CD4-positive, alpha-beta T cell (primary cell): ENCODE measurements at regions of chr17 and their contacts with region 1.

Region 1: DNA sequence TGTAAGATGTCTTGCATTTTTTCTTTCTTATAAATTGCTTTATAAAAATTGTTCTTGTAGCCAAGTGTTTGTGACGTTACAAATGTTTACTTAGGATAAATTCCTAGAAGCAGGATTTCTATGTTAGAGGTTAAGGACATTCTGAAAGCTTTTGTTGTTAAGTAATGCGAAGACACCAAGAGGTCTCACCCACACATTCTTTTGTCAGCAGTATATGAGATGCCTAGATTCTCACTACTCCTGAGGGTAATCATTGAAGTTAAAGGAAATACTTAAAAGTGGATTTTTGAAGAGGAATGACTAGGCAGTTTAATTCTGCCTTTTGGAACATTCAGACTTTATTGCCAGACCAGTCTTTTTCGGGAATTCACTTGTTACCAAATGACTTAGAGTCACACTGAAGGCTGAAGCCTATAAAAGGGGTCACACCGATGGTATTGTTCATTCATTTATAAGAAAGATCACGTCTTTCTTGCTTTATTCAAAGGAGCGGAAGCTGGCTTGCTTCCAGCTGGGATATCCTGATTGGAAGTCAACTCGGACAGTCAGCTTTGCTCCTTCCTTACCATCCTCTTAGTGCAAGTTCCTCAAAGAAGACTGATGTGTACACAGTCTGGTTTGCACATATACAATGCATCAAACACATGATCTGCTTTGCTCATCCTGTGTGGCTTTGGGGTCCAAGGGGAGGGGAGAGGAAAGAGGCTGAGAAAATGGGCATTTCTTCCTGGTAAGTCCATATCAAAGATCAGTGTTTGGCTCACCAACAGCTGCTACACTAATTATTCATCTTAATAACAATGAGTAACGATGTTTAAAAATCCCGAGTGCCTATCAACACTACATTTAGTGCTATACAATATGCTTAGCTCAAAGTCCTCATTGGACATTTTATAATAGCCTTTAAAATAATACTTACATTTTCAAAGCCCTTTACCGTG is 160.0 kb downstream of the MAP2K6 start:
- DNase-seq: no peak
- ATAC-seq: no peak
- H3K4me3 ChIP-seq: no peak overlapping the region
- H3K4me3 Mint-ChIP-seq: no peak overlapping the region
- H3K27ac ChIP-seq: no peak overlapping the region
- H3K27ac Mint-ChIP-seq: no peak overlapping the region
- H3K4me1 ChIP-seq: peaks cover under 1% of the 10 kb centered on the region
- H3K4me1 Mint-ChIP-seq: no peaks in the 10 kb centered on the region
- H3K27me3 ChIP-seq: peaks cover 0 to 6% of the 10 kb centered on the region in 2 experiments
- H3K27me3 Mint-ChIP-seq: peaks cover 11% of the 10 kb centered on the region
- CTCF ChIP-seq: no peak

Region 2: GRCh38 chr17:69473841-69474831 is 100.4 kb before region 1 on chr17:
- CTCF ChIA-PET with region 1: no interaction called
- POLR2A ChIA-PET with region 1: no interaction called
- intact Hi-C with region 1: no loop called
- DNase-seq: no peak
- ATAC-seq: no peak
- H3K4me3 ChIP-seq: no peak overlapping the region
- H3K4me3 Mint-ChIP-seq: no peak overlapping the region
- H3K27ac ChIP-seq: no peak overlapping the region
- H3K27ac Mint-ChIP-seq: no peak overlapping the region
- H3K4me1 ChIP-seq: no peaks in the 10 kb centered on the region
- H3K4me1 Mint-ChIP-seq: peaks cover 34% of the 10 kb centered on the region
- H3K27me3 ChIP-seq: no peaks in the 10 kb centered on the region
- H3K27me3 Mint-ChIP-seq: no peaks in the 10 kb centered on the region
- CTCF ChIP-seq: no peak

Region 3: GRCh38 chr17:70144260-70144846 is 569.8 kb after region 1 on chr17:
- CTCF ChIA-PET with region 1: no interaction called
- POLR2A ChIA-PET with region 1: no interaction called
- intact Hi-C with region 1: loop called (anchors 2 kb)
- DNase-seq: peak in 2 of 14 experiments; percentile 21 to 32
- ATAC-seq: no peak
- H3K4me3 ChIP-seq: no peak overlapping the region
- H3K4me3 Mint-ChIP-seq: no peak overlapping the region
- H3K27ac ChIP-seq: no peak overlapping the region
- H3K27ac Mint-ChIP-seq: no peak overlapping the region
- H3K4me1 ChIP-seq: no peaks in the 10 kb centered on the region
- H3K4me1 Mint-ChIP-seq: no peaks in the 10 kb centered on the region
- H3K27me3 ChIP-seq: no peaks in the 10 kb centered on the region
- H3K27me3 Mint-ChIP-seq: no peaks in the 10 kb centered on the region
- CTCF ChIP-seq: peak; percentile 48

Region 4: DNA sequence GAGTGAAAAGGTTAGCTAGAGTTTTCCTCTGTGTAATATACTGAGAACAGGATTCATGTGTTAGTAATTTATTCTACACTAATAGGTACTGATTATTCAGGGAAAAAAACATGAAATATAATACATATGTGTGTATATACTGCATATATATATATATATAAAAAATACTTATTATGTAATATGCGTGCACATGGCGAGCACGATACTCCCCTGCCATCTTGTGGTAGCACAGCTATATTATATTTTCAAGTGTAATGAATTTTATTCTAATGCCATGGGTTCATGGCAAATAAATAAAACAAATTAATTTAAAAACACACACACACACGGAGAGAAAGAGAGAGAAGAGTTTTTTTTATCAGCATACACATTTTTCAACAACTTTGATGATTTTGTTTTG is 1055.4 kb after region 1 on chr17:
- CTCF ChIA-PET with region 1: no interaction called
- POLR2A ChIA-PET with region 1: no interaction called
- intact Hi-C with region 1: loop called in 1 of 2 experiments (anchors 5 kb)
- DNase-seq: peak in 2 of 14 experiments; percentile 4
- ATAC-seq: no peak
- H3K4me3 ChIP-seq: no peak overlapping the region
- H3K4me3 Mint-ChIP-seq: no peak overlapping the region
- H3K27ac ChIP-seq: no peak overlapping the region
- H3K27ac Mint-ChIP-seq: no peak overlapping the region
- H3K4me1 ChIP-seq: no peaks in the 10 kb centered on the region
- H3K4me1 Mint-ChIP-seq: no peaks in the 10 kb centered on the region
- H3K27me3 ChIP-seq: no peaks in the 10 kb centered on the region
- H3K27me3 Mint-ChIP-seq: peaks cover 3% of the 10 kb centered on the region
- CTCF ChIP-seq: no peak